Calu3 (cell line): ENCODE measurements at regions of chr1 and their contacts with region 1.

Region 1: DNA sequence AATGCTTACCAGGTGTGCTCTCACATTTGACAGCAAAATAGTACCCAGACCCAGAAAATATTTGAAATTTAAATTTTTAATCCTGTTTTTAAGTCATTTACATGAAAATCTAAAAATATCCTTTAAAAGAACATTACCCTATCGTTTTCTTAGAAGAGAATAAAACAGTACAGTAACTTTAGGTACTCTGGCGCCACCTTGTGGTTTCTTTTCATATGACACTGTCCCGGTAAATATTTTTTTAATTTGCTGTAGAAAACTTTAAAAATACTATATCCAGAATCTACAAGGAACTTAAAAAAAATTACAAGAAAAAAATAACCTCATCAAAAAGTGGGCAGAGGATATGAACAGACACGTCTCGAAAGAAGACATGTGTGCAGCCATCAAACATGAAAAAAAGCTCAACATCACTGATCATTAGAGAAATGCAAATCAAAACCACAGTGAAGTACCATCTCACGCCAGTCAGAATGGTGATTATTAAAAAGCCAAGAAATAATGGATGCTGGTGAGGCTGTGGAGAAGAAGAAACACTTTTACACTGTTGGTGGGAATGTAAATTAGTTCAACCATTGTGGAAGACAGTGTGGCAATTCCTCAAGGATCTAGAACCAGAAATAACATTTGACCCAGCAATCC is 129.2 kb downstream of the RGS21 start:
- DNase-seq: peak; percentile 68
- H3K4me3 Mint-ChIP-seq: no peak overlapping the region
- H3K27ac Mint-ChIP-seq: no peak overlapping the region
- H3K4me1 Mint-ChIP-seq: peaks cover 42% of the 10 kb centered on the region
- H3K27me3 Mint-ChIP-seq: no peaks in the 10 kb centered on the region
- CTCF ChIP-seq: peak; percentile 71

Region 2: DNA sequence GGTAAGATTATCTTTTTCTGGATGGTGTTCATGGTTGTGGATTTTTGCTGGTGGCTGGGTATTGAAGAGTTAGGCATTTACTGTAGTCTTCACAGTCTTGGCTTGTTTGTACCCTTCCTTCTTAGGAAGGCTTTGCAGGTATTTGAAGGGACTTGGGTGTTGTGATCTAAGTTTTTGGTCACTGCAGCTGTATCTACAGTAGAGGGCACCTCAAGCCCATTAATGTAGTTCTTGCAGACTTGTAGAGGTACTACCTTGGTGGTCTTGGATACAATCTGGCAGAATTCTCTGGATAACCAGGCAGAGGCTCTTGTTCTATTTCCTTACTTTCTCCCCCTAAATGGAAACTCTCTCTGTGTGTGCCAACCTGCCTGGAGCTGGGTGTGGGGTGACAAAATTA is 1812.5 kb before region 1 on chr1:
- CTCF ChIA-PET with region 1: no interaction called
- intact Hi-C with region 1: loop called (anchors 10 kb)
- DNase-seq: no peak
- H3K4me3 Mint-ChIP-seq: no peak overlapping the region
- H3K27ac Mint-ChIP-seq: no peak overlapping the region
- H3K4me1 Mint-ChIP-seq: no peaks in the 10 kb centered on the region
- H3K27me3 Mint-ChIP-seq: no peaks in the 10 kb centered on the region
- CTCF ChIP-seq: no peak

Region 3: DNA sequence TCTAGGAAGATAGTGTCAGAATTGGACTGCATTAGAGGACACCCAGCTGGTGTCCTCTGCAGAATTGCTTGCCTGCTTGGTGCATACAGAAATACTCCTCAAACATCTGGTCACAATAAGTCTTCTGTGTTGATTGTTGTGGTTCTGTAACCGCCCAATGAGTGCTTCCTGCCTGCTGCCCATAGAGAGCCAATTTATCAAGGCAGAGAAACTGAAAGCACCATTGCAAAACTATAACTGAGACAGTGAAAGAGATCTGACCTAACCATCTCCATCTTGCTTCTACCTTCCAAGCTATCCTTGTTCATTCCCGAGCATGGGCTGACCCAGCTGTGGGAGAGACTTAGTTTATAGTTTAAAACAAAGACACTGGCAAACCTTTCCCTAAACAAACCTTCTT is 750.1 kb before region 1 on chr1:
- CTCF ChIA-PET with region 1: no interaction called
- intact Hi-C with region 1: loop called (anchors 10 kb)
- DNase-seq: no peak
- H3K4me3 Mint-ChIP-seq: no peak overlapping the region
- H3K27ac Mint-ChIP-seq: no peak overlapping the region
- H3K4me1 Mint-ChIP-seq: peaks cover 2% of the 10 kb centered on the region
- H3K27me3 Mint-ChIP-seq: no peaks in the 10 kb centered on the region
- CTCF ChIP-seq: no peak

Region 4: GRCh38 chr1:191993549-191993948 is 452.4 kb before region 1 on chr1:
- CTCF ChIA-PET with region 1: no interaction called
- intact Hi-C with region 1: loop called (anchors 2 kb)
- DNase-seq: no peak
- H3K4me3 Mint-ChIP-seq: no peak overlapping the region
- H3K27ac Mint-ChIP-seq: no peak overlapping the region
- H3K4me1 Mint-ChIP-seq: no peaks in the 10 kb centered on the region
- H3K27me3 Mint-ChIP-seq: no peaks in the 10 kb centered on the region
- CTCF ChIP-seq: no peak

Region 5: GRCh38 chr1:192311281-192311680 is 134.7 kb before region 1 on chr1:
- CTCF ChIA-PET with region 1: no interaction called
- intact Hi-C with region 1: loop called (anchors 2 kb)
- DNase-seq: peak; percentile 25
- H3K4me3 Mint-ChIP-seq: no peak overlapping the region
- H3K27ac Mint-ChIP-seq: no peak overlapping the region
- H3K4me1 Mint-ChIP-seq: no peaks in the 10 kb centered on the region
- H3K27me3 Mint-ChIP-seq: no peaks in the 10 kb centered on the region
- CTCF ChIP-seq: peak; percentile 36